Mammary epithelial cell (primary cell): ENCODE measurements at regions of chr15 and their contacts with region 1.

Region 1: DNA sequence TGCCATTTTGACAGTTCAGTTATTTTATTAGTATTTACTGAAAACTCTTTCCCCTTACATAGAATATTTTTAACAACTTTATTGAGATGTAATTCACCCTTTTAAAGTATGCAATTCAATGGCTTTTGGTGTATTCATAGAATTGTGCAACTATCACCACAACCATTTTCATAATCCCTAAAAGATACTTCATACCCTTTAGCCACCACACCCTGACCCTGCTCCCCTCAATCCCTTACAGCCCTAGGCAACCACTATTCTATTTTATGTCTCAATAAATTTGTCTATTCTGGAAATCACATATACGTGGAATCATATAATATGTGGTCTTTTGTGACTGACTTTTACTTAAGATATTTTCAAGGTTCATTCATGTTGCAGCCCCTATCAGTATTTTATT is 29.7 kb downstream of the TEX9 start:
- DNase-seq: no peak
- H3K4me3 ChIP-seq: no peak overlapping the region
- H3K27ac ChIP-seq: no peak overlapping the region
- H3K4me1 ChIP-seq: no peaks in the 10 kb centered on the region
- H3K27me3 ChIP-seq: no peaks in the 10 kb centered on the region
- CTCF ChIP-seq: no peak

Region 2: GRCh38 chr15:56307126-56307525 is 87.8 kb before region 1 on chr15:
- CTCF ChIA-PET with region 1: no interaction called
- dilution Hi-C with region 1: loop called (anchors 5 kb)
- in situ Hi-C with region 1: no loop called
- intact Hi-C with region 1: no loop called
- DNase-seq: no peak
- H3K4me3 ChIP-seq: no peak overlapping the region
- H3K27ac ChIP-seq: no peak overlapping the region
- H3K4me1 ChIP-seq: no peaks in the 10 kb centered on the region
- H3K27me3 ChIP-seq: no peaks in the 10 kb centered on the region
- CTCF ChIP-seq: no peak

Region 3: GRCh38 chr15:56491110-56491722 is 96.3 kb after region 1 on chr15:
- CTCF ChIA-PET with region 1: no interaction called
- dilution Hi-C with region 1: no loop called
- in situ Hi-C with region 1: no loop called
- intact Hi-C with region 1: no loop called
- DNase-seq: peak; percentile 48
- H3K4me3 ChIP-seq: no peak overlapping the region
- H3K27ac ChIP-seq: no peak overlapping the region
- H3K4me1 ChIP-seq: no peaks in the 10 kb centered on the region
- H3K27me3 ChIP-seq: no peaks in the 10 kb centered on the region
- CTCF ChIP-seq: peak; percentile 95 to 99

Region 4: GRCh38 chr15:57640935-57641682 is 1246.2 kb after region 1 on chr15:
- CTCF ChIA-PET with region 1: no interaction called
- dilution Hi-C with region 1: no loop called
- in situ Hi-C with region 1: no loop called
- intact Hi-C with region 1: no loop called
- DNase-seq: peak; percentile 30
- H3K4me3 ChIP-seq: no peak overlapping the region
- H3K27ac ChIP-seq: no peak overlapping the region
- H3K4me1 ChIP-seq: no peaks in the 10 kb centered on the region
- H3K27me3 ChIP-seq: no peaks in the 10 kb centered on the region
- CTCF ChIP-seq: peak; percentile 41 to 60